ENCODE measurements at regions of chr1 and their contacts with region 1.

Region 1: DNA sequence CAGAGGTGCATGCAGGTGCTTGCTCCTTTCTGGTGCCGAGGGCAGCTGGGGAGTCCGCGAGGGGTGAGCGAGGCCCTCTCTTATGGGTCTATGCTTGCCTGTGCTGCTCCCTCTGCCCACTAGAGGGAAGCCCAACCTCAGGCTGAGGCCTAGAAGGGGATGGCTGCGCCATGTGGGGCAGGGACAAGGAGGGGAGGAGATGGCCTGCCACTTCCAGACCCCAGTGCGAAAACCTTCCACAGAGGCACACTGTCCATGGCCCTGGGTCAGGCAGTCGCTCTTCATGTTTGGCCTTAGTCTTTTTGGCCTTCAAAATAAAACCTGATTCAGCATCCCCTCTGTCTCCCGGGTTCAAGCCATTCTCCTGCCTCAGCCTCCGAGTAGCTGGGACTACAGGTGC is 14.0 kb downstream of the RHBG start:
- DNase-seq: peak; percentile 51 to 77 (median 66)
- H3K4me3 ChIP-seq: no peak overlapping the region
- H3K27ac ChIP-seq: no peak overlapping the region
- H3K4me1 ChIP-seq: no peaks in the 10 kb centered on the region
- H3K27me3 ChIP-seq: peaks cover 8% of the 10 kb centered on the region
- CTCF ChIP-seq: peak; percentile 65 to 84 (median 76)
- POLR2A ChIP-seq: no peak

Region 2: GRCh38 chr1:156445789-156446263 is 62.8 kb after region 1 on chr1:
- intact Hi-C with region 1: loop called (anchors 2 kb)
- DNase-seq: peak; percentile 76 to 91 (median 80)
- H3K4me3 ChIP-seq: no peak overlapping the region
- H3K27ac ChIP-seq: no peak overlapping the region
- H3K4me1 ChIP-seq: no peaks in the 10 kb centered on the region
- H3K27me3 ChIP-seq: peaks cover 41% of the 10 kb centered on the region
- CTCF ChIP-seq: peak; percentile 93 to 98 (median 96)
- POLR2A ChIP-seq: no peak

Region 3: DNA sequence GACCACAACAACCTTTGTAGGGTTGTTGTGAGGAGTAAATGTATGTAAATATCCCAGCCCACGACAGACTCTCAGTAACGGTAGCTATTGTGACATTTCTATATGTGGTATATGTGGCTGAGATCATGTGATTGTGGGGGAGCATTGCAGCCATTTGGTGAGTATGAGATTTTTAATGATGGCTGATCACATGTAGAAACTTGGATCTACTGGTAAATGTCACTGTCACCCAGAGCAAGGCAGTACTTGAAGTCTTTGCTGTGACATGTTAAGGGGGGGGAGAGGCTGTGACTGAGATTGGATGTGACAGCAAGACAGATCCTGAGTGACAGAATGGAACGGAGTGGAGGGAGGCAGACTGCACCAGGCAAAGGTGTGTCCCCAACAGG is 141.5 kb after region 1 on chr1:
- intact Hi-C with region 1: loop called in 1 of 2 experiments (anchors 10 kb)
- DNase-seq: no peak
- H3K4me3 ChIP-seq: no peak overlapping the region
- H3K27ac ChIP-seq: no peak overlapping the region
- H3K4me1 ChIP-seq: no peaks in the 10 kb centered on the region
- H3K27me3 ChIP-seq: no peaks in the 10 kb centered on the region
- CTCF ChIP-seq: no peak
- POLR2A ChIP-seq: no peak

Region 4: DNA sequence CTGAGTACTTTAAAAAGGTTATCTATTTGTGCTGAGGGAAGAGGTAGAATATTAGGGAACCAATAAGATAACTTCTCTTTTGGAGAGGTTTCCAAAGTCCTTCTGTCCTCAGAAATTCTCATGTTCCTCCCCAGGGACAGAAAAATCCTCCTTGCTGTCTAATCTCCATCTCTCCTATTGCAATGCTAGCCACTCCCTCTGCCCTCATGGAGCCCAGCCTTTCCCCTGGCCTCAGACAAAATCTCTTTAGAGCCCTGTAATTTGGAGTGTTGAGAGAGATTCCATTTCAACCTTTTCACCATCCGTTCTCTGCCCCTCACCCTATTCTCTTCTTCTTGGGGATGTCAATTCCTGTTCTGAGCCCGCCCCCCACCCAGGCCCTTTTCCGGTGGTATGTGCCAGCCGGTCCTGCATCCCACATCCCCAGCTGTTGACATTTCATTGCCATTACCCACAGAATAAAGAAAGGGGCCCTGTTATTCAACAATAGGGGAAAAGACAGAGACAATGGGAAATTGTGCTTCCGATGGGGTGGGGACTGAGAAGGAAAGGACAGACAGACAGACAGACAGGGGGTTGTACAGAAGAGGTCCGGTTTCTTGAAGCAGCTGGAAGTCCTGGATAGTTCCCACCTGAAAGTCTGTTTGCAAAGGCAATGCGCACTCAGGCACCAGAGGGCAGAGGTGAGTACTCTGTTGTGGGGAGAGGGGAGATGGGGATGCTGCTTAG is 236.0 kb after region 1 on chr1 and contains the start of gene HAPLN2:
- intact Hi-C with region 1: loop called in 1 of 2 experiments (anchors 10 kb)
- DNase-seq: peak in 1 of 7 donors; percentile 27
- H3K4me3 ChIP-seq: no peak within 1 kb of the TSS
- H3K27ac ChIP-seq: no peak within 1 kb of the TSS
- H3K4me1 ChIP-seq: peaks cover 4 to 14% of the 10 kb centered on the region in 2 donors
- H3K27me3 ChIP-seq: peaks cover 14% of the 10 kb centered on the region
- CTCF ChIP-seq: peak in 3 of 6 experiments; percentile 6 to 26 (median 19)
- POLR2A ChIP-seq: no peak
- total RNA-seq, gene HAPLN2: 0.17 to 1.5 (median 0.73) TPM in 6 of 9 donors, not detected in the others

Measured in adrenal gland (tissue), 19 donors.